ENCODE measurements at regions of chr1 and their contacts with region 1.

Region 1: GRCh38 chr1:9455487-9456234 is 83.6 kb upstream of the SLC25A33 start:
- DNase-seq: peak; percentile 86
- ATAC-seq: peak; percentile 85

Region 2: GRCh38 chr1:9269078-9269501 is 186.6 kb before region 1 on chr1:
- intact Hi-C with region 1: loop called (anchors 10 kb)
- DNase-seq: no peak
- ATAC-seq: no peak

Region 3: DNA sequence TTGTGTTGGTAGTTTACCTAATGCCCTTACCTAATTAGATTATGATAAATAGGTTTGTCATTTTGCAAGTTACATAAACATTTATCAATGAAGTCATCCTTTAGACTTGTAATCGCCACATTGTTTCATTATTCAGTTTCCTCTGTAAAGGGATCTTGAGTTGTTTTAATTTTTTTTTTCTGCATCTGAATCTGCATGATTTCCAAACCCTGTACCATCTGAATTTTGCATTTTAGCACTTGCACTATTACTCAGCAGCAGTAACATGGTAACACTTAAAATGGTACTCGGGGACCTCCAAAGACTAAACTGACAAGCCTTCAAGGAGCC is 1569.2 kb after region 1 on chr1:
- intact Hi-C with region 1: no loop called
- DNase-seq: no peak
- ATAC-seq: no peak

Measured in sciatic nerve (tissue), 2 donors.